IMR-90 (cell line): ENCODE measurements at regions of chr3 and their contacts with region 1.

Region 1: DNA sequence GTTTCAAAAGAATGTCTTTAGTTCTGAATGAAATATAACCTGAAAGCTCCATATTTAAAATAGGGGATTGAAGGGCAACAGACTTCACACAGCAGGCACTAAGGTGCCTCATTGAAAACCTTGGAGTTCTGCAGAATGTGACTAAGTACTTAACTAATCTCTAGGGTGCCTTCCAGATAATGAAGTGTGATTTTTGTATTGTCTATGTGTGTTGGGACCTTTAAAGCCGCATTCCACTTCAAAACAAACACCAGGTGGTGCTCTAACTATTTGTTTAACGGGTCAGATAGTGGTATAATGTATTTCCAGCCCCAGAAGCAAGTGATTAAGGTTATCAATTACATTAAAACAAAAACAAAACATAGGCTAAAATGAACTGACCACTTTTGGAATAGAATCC is 28.0 kb downstream of the TFG start:
- DNase-seq: peak; percentile 15
- ATAC-seq: no peak; the same call in 1 of the 2 replicates
- H3K4me3 ChIP-seq: no peak overlapping the region
- H3K27ac ChIP-seq: no peak overlapping the region
- H3K4me1 ChIP-seq: 0 out of 2 replicates have a peak, but pooled peaks cover 1% of the 10 kb centered on the region
- H3K27me3 ChIP-seq: no peaks in the 10 kb centered on the region
- CTCF ChIP-seq: peak; percentile 39
- POLR2A ChIP-seq: no peak
- RAD21 ChIP-seq: peak; percentile 44

Region 2: GRCh38 chr3:99842826-99843589 is 894.3 kb before region 1 on chr3:
- CTCF ChIA-PET with region 1: no interaction called
- POLR2A ChIA-PET with region 1: no interaction called
- dilution Hi-C with region 1: no loop called
- in situ Hi-C with region 1: loop called (anchors 25 kb)
- intact Hi-C with region 1: no loop called
- DNase-seq: peak; percentile 73
- ATAC-seq: peak; percentile 82
- H3K4me3 ChIP-seq: no peak overlapping the region
- H3K27ac ChIP-seq: no peak overlapping the region
- H3K4me1 ChIP-seq: peaks cover 15% of the 10 kb centered on the region
- H3K27me3 ChIP-seq: no peaks in the 10 kb centered on the region
- CTCF ChIP-seq: peak; percentile 83
- POLR2A ChIP-seq: no peak
- RAD21 ChIP-seq: peak; percentile 80

Region 3: DNA sequence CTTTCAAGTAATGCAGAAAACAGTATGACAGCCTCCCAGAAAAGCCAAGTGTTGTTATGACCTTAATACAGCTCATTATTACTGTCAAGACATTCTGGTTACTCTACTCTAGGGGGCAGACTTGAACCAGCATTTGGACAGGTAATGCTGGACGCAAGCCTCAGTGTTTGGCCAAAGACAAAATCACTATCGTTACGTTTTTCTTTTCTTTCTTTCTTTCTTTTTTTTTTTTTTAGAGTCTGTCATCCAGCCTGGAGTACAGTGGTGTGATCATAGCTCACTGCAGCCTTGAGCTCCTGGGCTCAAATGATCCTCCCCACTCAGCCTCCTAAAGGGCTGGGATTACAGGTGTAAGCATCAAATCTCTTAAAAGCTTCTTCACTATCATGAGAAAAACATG is 274.3 kb before region 1 on chr3:
- CTCF ChIA-PET with region 1: no interaction called
- POLR2A ChIA-PET with region 1: no interaction called
- dilution Hi-C with region 1: no loop called
- in situ Hi-C with region 1: no loop called
- intact Hi-C with region 1: loop called (anchors 10 kb)
- DNase-seq: peak; percentile 78
- ATAC-seq: peak; percentile 94
- H3K4me3 ChIP-seq: no peak overlapping the region
- H3K27ac ChIP-seq: no peak overlapping the region
- H3K4me1 ChIP-seq: no peaks in the 10 kb centered on the region; the same call in 1 of the 2 replicates
- H3K27me3 ChIP-seq: no peaks in the 10 kb centered on the region
- CTCF ChIP-seq: peak; percentile 92
- POLR2A ChIP-seq: 0 out of 2 replicates have a peak, but pooled peaks have one; percentile 27
- RAD21 ChIP-seq: peak; percentile 98

Region 4: DNA sequence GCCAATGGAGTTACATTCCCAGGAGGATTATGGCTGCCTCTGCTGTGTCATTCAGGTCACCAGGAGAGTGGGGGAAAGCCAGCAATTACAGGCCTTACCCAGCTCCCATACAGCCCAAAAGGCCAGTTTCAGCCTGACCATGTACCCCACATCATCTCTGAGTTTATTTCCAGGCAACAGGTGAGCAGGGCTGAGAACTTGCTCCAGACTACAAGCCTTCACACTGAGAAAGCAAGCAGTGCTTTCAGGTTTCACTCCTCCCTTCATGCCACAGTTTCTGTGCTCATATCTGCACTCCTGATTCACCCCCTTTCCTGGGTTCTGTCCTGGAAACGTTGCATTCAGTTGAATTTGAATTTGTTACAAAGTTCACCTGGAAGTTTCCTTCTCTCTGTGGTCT is 324.0 kb after region 1 on chr3:
- CTCF ChIA-PET with region 1: no interaction called
- POLR2A ChIA-PET with region 1: no interaction called
- dilution Hi-C with region 1: no loop called
- in situ Hi-C with region 1: no loop called
- intact Hi-C with region 1: no loop called
- DNase-seq: no peak
- ATAC-seq: no peak
- H3K4me3 ChIP-seq: no peak overlapping the region
- H3K27ac ChIP-seq: no peak overlapping the region
- H3K4me1 ChIP-seq: peaks cover 4% of the 10 kb centered on the region; the same call in 1 of the 2 replicates
- H3K27me3 ChIP-seq: no peaks in the 10 kb centered on the region
- CTCF ChIP-seq: no peak
- POLR2A ChIP-seq: no peak
- RAD21 ChIP-seq: no peak

Region 5: DNA sequence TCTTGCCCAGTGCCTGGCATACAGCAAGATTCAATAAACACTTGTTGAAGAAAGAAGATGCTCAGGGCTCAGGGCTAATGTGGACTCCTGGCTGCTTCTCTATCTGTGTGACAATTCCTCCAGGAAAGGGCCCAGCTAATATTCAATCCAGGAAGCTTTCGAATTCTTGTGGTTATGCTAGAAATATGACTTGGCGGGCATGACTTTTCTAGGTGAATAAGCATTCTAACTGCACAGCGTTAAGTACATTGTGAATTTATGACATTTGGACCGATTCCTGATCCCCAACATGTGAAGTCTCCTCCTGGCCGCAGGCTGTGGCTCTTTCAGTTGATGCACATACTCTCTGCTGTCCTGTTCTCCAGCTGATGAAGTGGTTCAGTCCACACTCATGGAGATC is 466.1 kb after region 1 on chr3:
- CTCF ChIA-PET with region 1: no interaction called
- POLR2A ChIA-PET with region 1: no interaction called
- dilution Hi-C with region 1: no loop called
- in situ Hi-C with region 1: loop called (anchors 10 kb)
- intact Hi-C with region 1: no loop called
- DNase-seq: peak; percentile 17
- ATAC-seq: no peak
- H3K4me3 ChIP-seq: no peak overlapping the region
- H3K27ac ChIP-seq: no peak overlapping the region
- H3K4me1 ChIP-seq: no peaks in the 10 kb centered on the region
- H3K27me3 ChIP-seq: peaks cover 2% of the 10 kb centered on the region; the same call in 1 of the 2 replicates
- CTCF ChIP-seq: no peak
- POLR2A ChIP-seq: no peak
- RAD21 ChIP-seq: no peak